ENCODE measurements at regions of chr12 and their contacts with region 1.

Region 1: DNA sequence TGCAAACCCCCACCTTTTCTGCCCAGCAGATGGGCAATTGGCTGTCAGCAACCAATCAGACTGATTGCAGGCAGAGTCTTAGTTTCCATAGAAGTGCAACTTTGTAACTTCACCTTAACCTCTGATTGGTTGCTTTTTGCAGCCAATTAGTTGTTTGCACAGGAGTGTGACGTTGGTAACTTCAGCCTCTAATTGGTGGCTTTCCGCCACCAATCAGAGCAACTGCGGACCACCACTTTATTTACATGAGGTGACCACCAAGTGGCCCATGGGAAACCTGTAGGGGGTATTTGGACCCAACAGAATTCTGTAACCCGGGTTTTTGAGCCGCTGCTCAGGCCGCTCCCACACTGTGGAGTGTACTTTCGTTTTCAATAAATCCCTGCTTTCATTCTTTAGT is 32.3 kb downstream of the CDKN1B start:
- DNase-seq: no peak
- H3K4me3 ChIP-seq: peak overlapping the region; percentile 20 to 59 (median 48)
- H3K27ac ChIP-seq: peak overlapping the region; percentile 59 to 65
- H3K4me1 ChIP-seq: no peaks in the 10 kb centered on the region
- H3K27me3 ChIP-seq: no peaks in the 10 kb centered on the region
- CTCF ChIP-seq: no peak
- POLR2A ChIP-seq: no peak

Region 2: DNA sequence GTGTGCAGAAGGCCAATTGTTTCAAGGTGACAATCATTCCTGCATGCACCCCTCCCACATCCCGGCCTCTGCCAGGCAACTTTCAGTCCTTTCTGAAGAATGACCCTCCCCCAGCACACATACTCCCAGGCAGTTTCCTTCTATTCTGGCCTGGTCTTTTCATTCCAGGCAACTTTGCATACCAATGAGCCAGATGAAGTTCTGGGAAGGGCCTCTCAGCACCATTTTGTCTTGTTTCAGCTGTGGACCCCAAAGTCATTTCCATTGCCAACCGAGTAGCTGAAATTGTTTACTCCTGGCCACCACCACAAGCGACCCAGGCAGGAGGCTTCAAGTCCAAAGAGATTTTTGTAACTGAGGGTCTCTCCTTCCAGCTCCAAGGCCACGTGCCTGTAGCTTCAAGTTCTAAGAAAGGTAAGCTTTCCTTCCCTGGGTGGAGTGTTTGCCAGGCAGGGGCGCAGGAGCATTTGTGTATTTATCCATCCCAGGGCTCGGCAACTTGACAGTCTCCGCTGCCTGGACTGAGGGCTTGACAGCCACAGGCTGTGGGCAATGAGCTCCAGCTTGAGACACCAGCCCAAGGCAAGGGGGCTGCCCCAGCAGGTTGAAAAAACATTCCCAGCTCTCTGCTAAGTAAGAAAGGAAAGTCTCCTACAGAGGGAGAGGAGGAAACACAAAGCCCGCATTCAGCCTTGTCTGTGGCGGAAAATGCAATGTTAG is 662.3 kb before region 1 on chr12:
- intact Hi-C with region 1: loop called (anchors 5 kb)
- DNase-seq: no peak
- H3K4me3 ChIP-seq: no peak overlapping the region
- H3K27ac ChIP-seq: no peak overlapping the region
- H3K4me1 ChIP-seq: no peaks in the 10 kb centered on the region
- H3K27me3 ChIP-seq: no peaks in the 10 kb centered on the region
- CTCF ChIP-seq: no peak
- POLR2A ChIP-seq: no peak

Region 3: DNA sequence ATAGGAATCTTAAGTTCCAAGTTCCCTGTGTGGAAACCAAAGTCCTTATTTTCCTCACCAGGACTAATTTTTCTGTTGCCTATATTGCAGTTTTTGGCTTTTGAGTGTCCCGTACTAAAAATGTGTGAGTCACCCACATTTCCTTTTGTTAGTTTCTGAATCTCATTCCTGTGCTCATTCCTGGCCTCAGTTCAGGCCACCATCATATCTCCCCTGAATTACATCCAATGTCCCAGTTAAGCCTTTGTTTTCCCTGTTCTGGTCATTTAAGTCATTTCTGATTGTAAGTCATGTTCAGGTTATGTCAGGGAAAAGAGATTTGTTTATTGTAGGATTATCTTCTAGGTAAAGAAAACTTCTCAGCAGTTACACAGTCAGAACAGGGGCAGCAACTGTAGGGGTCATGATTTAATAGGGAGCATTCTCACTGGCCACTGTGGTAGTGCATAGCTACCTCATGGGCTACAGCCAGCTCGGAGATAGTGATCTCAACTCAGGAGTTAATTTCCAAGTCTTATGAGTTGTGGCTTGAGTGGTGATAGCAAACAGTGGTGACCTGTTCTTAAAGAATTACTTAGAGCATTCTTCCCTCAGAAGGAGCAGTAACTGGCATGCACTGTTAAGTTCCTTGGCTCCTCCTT is 70.4 kb after region 1 on chr12:
- intact Hi-C with region 1: no loop called
- DNase-seq: no peak
- H3K4me3 ChIP-seq: peak overlapping the region in 1 of 3 donors; percentile 39
- H3K27ac ChIP-seq: peak overlapping the region; percentile 82 to 86
- H3K4me1 ChIP-seq: peaks cover 6 to 17% of the 10 kb centered on the region in 2 donors
- H3K27me3 ChIP-seq: no peaks in the 10 kb centered on the region
- CTCF ChIP-seq: no peak
- POLR2A ChIP-seq: no peak